ENCODE measurements at regions of chr14 and their contacts with region 1.

Region 1: DNA sequence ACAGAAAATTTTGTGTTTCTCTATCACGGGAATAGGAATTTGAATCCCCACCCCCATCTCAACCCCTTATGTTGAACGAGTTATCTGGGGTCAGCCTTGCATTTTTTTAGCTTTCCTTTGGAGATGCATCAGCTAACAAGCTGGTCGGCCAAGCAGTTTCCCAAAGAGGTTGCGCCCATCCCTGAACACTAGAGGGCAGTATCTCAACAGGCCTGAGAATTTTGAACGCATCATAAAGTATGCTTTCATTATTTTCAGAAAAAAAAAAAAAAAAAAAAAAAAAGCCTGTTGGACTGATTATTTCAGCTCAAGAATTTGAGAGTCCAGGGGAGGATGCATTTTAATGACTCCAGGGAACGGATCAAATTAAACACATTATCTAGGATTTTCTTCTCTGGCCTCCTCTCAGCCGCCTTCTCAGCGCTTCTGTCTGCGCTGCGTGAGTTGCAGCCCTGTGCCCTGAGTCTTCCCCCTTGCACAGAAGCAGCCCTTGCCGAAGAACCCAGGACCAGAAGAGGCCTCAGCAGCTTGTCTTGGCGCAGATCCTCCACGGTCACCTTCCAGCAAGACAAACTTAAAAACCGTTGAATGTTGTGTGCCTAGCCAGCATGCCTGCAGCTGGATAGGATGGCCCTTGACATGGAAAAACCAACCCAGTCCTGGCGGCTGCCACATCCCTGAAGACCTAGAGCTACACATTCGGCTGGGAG is 76.6 kb upstream of the GZMB start:
- DNase-seq: no peak
- ATAC-seq: peak; percentile 50
- H3K4me3 ChIP-seq: no peak overlapping the region
- H3K27ac ChIP-seq: no peak overlapping the region
- H3K4me1 ChIP-seq: peaks cover 15% of the 10 kb centered on the region
- H3K27me3 ChIP-seq: no peaks in the 10 kb centered on the region
- CTCF ChIP-seq: peak; percentile 81 to 89 (median 82)
- EP300 ChIP-seq: no peak
- POLR2A ChIP-seq: no peak
- RAD21 ChIP-seq: peak; percentile 80

Region 2: DNA sequence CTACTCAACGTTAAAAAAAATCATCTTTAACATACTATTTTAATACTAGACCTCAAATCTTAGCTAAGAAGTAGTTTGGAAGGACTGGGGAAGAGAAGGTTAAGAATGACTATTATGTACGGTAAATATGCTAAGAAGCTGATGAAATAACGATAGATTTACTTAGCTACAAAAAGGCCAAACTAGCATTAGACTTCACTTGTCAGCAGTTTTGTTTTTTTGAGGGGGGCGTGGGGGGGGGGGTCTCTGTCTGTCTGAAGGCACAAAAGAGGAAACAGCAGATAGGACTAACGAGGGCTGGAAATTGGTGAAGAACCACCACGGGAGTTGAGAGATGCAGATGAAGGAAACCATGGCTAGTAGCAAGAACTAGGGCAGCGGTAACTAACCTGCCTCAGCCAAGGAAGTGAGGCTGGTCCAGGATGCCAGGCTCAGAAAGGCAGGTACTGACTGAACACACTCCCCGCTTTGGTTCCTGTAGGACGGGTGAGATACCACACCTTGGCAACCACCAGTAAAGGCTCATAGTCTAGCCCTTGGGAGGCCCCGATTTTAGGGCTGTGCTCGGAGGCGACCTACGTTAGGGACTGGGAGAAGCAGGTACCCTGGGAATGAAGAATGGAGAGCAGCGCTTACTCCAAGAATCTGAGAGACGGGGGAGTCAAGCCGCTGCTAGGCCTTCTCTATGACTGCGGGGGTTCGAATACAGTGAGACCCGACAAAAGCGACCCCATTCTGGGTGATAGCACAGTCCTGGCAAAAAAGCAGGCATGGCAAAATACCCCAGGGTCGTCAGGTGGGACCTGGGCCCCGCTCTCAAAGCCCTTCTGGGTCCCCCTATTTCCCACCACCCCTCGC is 479.1 kb before region 1 on chr14:
- CTCF ChIA-PET with region 1: no interaction called
- POLR2A ChIA-PET with region 1: no interaction called
- RAD21 ChIA-PET with region 1: no interaction called
- SMC1A ChIA-PET with region 1: no interaction called
- in situ Hi-C with region 1: no loop called
- intact Hi-C with region 1: no loop called
- DNase-seq: no peak
- ATAC-seq: peak; percentile 34
- H3K4me3 ChIP-seq: peak overlapping the region; percentile 87
- H3K27ac ChIP-seq: peak overlapping the region; percentile 84
- H3K4me1 ChIP-seq: peaks cover 14% of the 10 kb centered on the region
- H3K27me3 ChIP-seq: no peaks in the 10 kb centered on the region
- CTCF ChIP-seq: no peak
- EP300 ChIP-seq: no peak
- POLR2A ChIP-seq: no peak
- RAD21 ChIP-seq: no peak

Region 3: GRCh38 chr14:24639905-24640304 is 70.7 kb before region 1 on chr14:
- CTCF ChIA-PET with region 1: no interaction called
- POLR2A ChIA-PET with region 1: no interaction called
- RAD21 ChIA-PET with region 1: no interaction called
- SMC1A ChIA-PET with region 1: no interaction called
- in situ Hi-C with region 1: no loop called
- intact Hi-C with region 1: no loop called
- DNase-seq: no peak
- ATAC-seq: no peak
- H3K4me3 ChIP-seq: no peak overlapping the region
- H3K27ac ChIP-seq: no peak overlapping the region
- H3K4me1 ChIP-seq: peaks cover 12% of the 10 kb centered on the region
- H3K27me3 ChIP-seq: no peaks in the 10 kb centered on the region
- CTCF ChIP-seq: no peak
- EP300 ChIP-seq: no peak
- POLR2A ChIP-seq: no peak
- RAD21 ChIP-seq: no peak

Region 4: DNA sequence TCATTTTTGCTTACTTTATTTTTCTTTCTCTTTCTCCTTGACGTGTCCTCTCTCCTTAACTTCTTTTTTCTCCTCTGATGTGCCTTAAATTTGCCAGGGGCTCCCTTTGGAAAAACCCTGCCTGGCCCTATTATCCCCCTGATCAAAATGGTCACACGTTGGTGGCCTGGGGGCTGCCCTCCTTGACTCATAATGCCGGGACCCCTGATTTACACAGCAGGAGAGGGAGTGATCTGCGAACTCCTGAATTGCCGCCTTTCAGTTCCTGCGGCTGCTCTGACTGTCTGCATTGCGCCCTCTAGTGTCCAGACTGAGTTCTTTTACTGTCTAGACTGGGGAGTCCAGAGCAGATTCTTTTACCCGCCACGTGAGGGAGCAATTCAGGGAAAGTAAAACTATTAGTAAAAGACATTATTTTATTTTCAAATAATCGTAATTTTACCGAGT is 31.7 kb before region 1 on chr14:
- CTCF ChIA-PET with region 1: interaction called, 49 read pairs
- POLR2A ChIA-PET with region 1: no interaction called
- RAD21 ChIA-PET with region 1: interaction called, 12 read pairs
- SMC1A ChIA-PET with region 1: interaction called, 12 read pairs
- in situ Hi-C with region 1: no loop called
- intact Hi-C with region 1: no loop called
- DNase-seq: peak; percentile 72
- ATAC-seq: peak; percentile 88
- H3K4me3 ChIP-seq: peak overlapping the region; percentile 60; the same call in 1 of the 2 replicates
- H3K27ac ChIP-seq: peak overlapping the region; percentile 3; the same call in 1 of the 2 replicates
- H3K4me1 ChIP-seq: peaks cover 9% of the 10 kb centered on the region
- H3K27me3 ChIP-seq: no peaks in the 10 kb centered on the region
- CTCF ChIP-seq: peak; percentile 94 to 100 (median 98); a peak in 5 of 6 replicates
- EP300 ChIP-seq: no peak
- POLR2A ChIP-seq: no peak
- RAD21 ChIP-seq: peak; percentile 85

Region 5: GRCh38 chr14:24721775-24722174 is 11.2 kb after region 1 on chr14:
- CTCF ChIA-PET with region 1: interaction called, 140 read pairs
- POLR2A ChIA-PET with region 1: no interaction called
- RAD21 ChIA-PET with region 1: interaction called, 4 read pairs
- SMC1A ChIA-PET with region 1: interaction called, 7 read pairs
- in situ Hi-C with region 1: no loop called
- intact Hi-C with region 1: no loop called
- DNase-seq: no peak
- ATAC-seq: no peak
- H3K4me3 ChIP-seq: no peak overlapping the region
- H3K27ac ChIP-seq: no peak overlapping the region
- H3K4me1 ChIP-seq: no peaks in the 10 kb centered on the region
- H3K27me3 ChIP-seq: no peaks in the 10 kb centered on the region
- CTCF ChIP-seq: no peak
- EP300 ChIP-seq: no peak
- POLR2A ChIP-seq: no peak
- RAD21 ChIP-seq: no peak

Region 6: GRCh38 chr14:25032092-25032784 is 321.7 kb after region 1 on chr14:
- CTCF ChIA-PET with region 1: interaction called, 8 read pairs
- POLR2A ChIA-PET with region 1: no interaction called
- RAD21 ChIA-PET with region 1: interaction called, 15 read pairs
- SMC1A ChIA-PET with region 1: interaction called, 10 read pairs
- in situ Hi-C with region 1: no loop called
- intact Hi-C with region 1: no loop called
- DNase-seq: no peak
- ATAC-seq: peak; percentile 93
- H3K4me3 ChIP-seq: no peak overlapping the region
- H3K27ac ChIP-seq: no peak overlapping the region
- H3K4me1 ChIP-seq: no peaks in the 10 kb centered on the region
- H3K27me3 ChIP-seq: no peaks in the 10 kb centered on the region
- CTCF ChIP-seq: peak; percentile 51 to 80 (median 66)
- EP300 ChIP-seq: no peak; a peak in 1 of 4 replicates
- POLR2A ChIP-seq: no peak
- RAD21 ChIP-seq: no peak

Region 7: GRCh38 chr14:25150934-25151790 is 440.6 kb after region 1 on chr14:
- CTCF ChIA-PET with region 1: interaction called, 47 read pairs
- POLR2A ChIA-PET with region 1: no interaction called
- RAD21 ChIA-PET with region 1: interaction called, 21 read pairs
- SMC1A ChIA-PET with region 1: interaction called, 19 read pairs
- in situ Hi-C with region 1: no loop called
- intact Hi-C with region 1: loop called (anchors 1 kb)
- DNase-seq: peak; percentile 1
- ATAC-seq: peak; percentile 64
- H3K4me3 ChIP-seq: no peak overlapping the region
- H3K27ac ChIP-seq: no peak overlapping the region
- H3K4me1 ChIP-seq: no peaks in the 10 kb centered on the region
- H3K27me3 ChIP-seq: no peaks in the 10 kb centered on the region
- CTCF ChIP-seq: peak; percentile 63 to 76 (median 67)
- EP300 ChIP-seq: no peak
- POLR2A ChIP-seq: no peak
- RAD21 ChIP-seq: peak; percentile 58

Region 8: GRCh38 chr14:25406818-25407217 is 696.3 kb after region 1 on chr14:
- CTCF ChIA-PET with region 1: interaction called, 18 read pairs
- POLR2A ChIA-PET with region 1: no interaction called
- RAD21 ChIA-PET with region 1: interaction called, 3 read pairs
- SMC1A ChIA-PET with region 1: interaction called, 5 read pairs
- in situ Hi-C with region 1: no loop called
- intact Hi-C with region 1: loop called (anchors 1 kb)
- DNase-seq: no peak
- ATAC-seq: peak; percentile 77
- H3K4me3 ChIP-seq: no peak overlapping the region
- H3K27ac ChIP-seq: no peak overlapping the region
- H3K4me1 ChIP-seq: no peaks in the 10 kb centered on the region
- H3K27me3 ChIP-seq: no peaks in the 10 kb centered on the region
- CTCF ChIP-seq: peak; percentile 40 to 43 (median 40); a peak in 4 of 6 replicates
- EP300 ChIP-seq: no peak
- POLR2A ChIP-seq: no peak
- RAD21 ChIP-seq: peak; percentile 21; the same call in 1 of the 2 replicates

Measured in GM12878 (cell line).